Activated T-helper 2 cell treated with anti-CD3 and anti-CD28 coated beads, Interferon-gamma antibody, Interleukin-2, Interleukin-4, amounts not matched to agents 10 μg/mL and 5 μg/mL and 100 μg/mL, durations not matched to agents 14 hours and 24 hours and 36 hours (primary cell): ENCODE measurements at regions of chr21 and their contacts with region 1.

Region 1: DNA sequence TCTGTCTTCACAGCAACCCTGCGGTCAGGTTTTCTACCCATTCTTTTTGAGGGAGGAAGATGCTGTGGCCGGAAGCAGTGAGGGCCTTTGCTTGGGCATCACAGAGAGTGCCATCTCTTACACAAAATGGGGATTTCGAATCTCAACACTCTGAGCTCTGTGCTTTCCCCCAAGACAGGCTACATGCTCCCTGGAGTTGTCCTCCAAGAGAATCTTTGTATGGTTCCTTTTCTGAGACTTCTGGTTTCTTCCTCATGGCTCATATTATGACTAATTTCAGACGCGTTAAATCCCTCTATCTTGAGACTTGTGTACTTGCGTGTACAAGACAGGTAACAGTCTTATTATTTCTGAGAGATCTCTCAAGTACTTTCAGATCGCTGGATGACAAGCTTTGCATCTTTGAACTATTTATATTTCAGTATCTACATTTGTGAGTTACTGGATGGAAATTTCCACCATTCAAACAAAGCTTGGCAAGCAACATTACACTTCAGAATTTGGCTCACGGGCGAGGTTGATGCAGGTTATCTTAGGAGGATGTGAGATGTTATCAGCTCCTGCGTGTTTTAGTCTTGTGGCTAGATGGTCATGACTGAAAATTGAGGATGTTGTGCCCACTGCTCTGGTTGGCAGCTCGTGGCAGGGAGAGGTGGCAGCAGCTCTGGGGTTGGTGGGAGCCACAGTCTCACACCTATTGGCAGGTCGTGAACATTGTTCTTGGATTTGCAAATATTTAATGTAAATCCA is 19.4 kb downstream of the ABCG1 start:
- DNase-seq: peak; percentile 57
- H3K4me3 Mint-ChIP-seq: peak overlapping the region; percentile 43
- H3K27ac Mint-ChIP-seq: peak overlapping the region; percentile 82
- H3K4me1 Mint-ChIP-seq: peaks cover 51% of the 10 kb centered on the region
- H3K27me3 Mint-ChIP-seq: no peaks in the 10 kb centered on the region

Region 2: GRCh38 chr21:41993744-41994143 is 244.6 kb before region 1 on chr21:
- intact Hi-C with region 1: no loop called
- DNase-seq: no peak
- H3K4me3 Mint-ChIP-seq: no peak overlapping the region
- H3K27ac Mint-ChIP-seq: no peak overlapping the region
- H3K4me1 Mint-ChIP-seq: peaks cover 3% of the 10 kb centered on the region
- H3K27me3 Mint-ChIP-seq: no peaks in the 10 kb centered on the region

Region 3: DNA sequence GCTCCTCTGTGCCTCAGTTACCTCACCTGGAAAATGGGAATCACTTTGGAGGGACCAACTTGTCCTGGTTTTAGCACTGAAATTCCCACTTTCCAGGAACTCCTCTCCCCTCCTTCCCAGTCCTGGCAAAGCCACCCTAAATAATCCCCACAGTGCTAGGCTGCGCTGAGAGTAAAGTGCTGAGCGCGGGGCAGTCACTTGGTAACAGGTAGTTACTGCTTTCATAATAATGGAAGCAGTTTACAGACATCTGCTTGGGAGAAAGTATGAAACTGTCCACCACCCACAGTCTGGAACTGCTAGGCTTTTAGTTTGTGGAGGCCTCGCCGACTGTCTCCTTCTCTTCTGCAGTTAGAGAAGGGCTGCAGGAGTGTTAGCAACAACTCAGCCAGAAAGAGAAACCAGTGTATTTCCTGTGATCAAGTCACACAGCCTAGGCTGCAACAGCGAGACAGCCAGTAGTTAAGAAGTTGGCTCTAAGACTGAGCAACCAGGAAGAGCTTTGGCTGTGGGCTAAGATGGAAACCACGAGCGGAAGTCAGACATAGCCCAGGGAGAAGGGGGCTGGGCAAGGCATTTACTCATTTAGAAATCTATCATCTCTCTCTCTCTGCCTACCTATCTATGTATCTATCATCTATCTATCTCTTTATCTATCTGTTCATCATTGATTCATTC is 50.2 kb before region 1 on chr21:
- intact Hi-C with region 1: loop called (anchors 1 kb)
- DNase-seq: peak; percentile 83
- H3K4me3 Mint-ChIP-seq: peak overlapping the region; percentile 48
- H3K27ac Mint-ChIP-seq: peak overlapping the region; percentile 90
- H3K4me1 Mint-ChIP-seq: peaks cover 64% of the 10 kb centered on the region
- H3K27me3 Mint-ChIP-seq: no peaks in the 10 kb centered on the region

Region 4: GRCh38 chr21:42220138-42220701 is 18.1 kb before region 1 on chr21:
- intact Hi-C with region 1: loop called (anchors 2 kb)
- DNase-seq: peak; percentile 77
- H3K4me3 Mint-ChIP-seq: peak overlapping the region; percentile 91
- H3K27ac Mint-ChIP-seq: peak overlapping the region; percentile 86
- H3K4me1 Mint-ChIP-seq: peaks cover 14% of the 10 kb centered on the region
- H3K27me3 Mint-ChIP-seq: peaks cover 2% of the 10 kb centered on the region

Region 5: DNA sequence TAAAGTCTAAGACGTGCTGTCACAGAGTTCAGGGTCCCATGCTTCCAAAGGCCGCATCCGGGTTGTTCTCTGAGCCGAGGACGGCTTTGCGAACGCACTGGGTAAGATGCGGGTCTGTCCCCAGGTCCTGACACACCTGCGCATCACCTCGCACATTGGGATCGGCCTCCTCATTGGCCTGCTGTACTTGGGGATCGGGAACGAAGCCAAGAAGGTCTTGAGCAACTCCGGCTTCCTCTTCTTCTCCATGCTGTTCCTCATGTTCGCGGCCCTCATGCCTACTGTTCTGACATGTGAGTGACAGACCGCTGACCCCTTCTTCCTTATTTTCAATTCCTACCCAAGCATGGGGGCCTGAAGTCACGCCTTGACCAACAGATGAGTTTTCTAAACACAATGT is 51.6 kb after region 1 on chr21:
- intact Hi-C with region 1: no loop called
- DNase-seq: no peak
- H3K4me3 Mint-ChIP-seq: no peak overlapping the region
- H3K27ac Mint-ChIP-seq: no peak overlapping the region
- H3K4me1 Mint-ChIP-seq: no peaks in the 10 kb centered on the region
- H3K27me3 Mint-ChIP-seq: no peaks in the 10 kb centered on the region

Region 6: DNA sequence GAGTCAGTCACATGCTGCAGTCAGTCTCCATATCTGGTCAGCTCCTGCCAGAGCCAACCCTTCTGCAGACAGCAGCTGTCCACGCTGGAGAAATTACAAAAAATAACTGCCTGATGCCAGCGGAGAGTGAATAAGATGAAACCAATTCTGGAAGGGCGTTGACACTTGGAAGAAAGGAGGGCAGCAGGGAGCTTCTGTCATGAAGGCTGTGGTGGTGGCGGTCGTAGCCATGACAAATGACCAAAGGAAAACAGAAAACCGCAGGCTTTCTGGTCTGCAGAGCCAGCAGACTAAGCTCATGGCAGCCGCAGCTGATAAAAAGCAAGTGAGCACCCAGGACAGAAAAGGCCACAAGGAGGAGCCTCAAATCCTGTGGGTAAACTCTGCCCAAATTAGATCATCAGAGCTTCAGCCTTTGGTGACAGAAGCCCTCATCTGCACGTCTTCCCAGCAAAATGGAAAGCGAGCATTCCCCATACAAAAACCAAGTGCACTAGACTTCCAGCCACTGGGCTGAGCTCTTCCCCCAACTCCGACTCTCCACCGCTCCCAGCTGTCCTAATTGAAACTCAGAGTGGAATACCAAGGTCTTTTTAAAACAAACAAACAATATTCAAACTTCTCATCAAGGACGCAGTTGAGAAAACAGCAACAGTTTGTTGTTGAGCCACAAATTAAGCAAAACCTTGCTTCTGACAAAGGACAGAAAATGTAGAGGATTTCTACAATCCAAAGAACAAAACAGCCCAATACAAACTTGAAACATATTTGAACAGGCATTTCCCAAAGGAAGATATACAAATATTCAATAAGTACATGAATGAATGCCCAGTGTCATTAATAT is 229.0 kb after region 1 on chr21:
- intact Hi-C with region 1: no loop called
- DNase-seq: no peak
- H3K4me3 Mint-ChIP-seq: no peak overlapping the region
- H3K27ac Mint-ChIP-seq: no peak overlapping the region
- H3K4me1 Mint-ChIP-seq: peaks cover 45% of the 10 kb centered on the region
- H3K27me3 Mint-ChIP-seq: peaks cover 1% of the 10 kb centered on the region

Region 7: GRCh38 chr21:42861848-42862400 is 623.6 kb after region 1 on chr21:
- intact Hi-C with region 1: no loop called
- DNase-seq: no peak
- H3K4me3 Mint-ChIP-seq: no peak overlapping the region
- H3K27ac Mint-ChIP-seq: no peak overlapping the region
- H3K4me1 Mint-ChIP-seq: peaks cover 3% of the 10 kb centered on the region
- H3K27me3 Mint-ChIP-seq: no peaks in the 10 kb centered on the region